T-cell (primary cell): ENCODE measurements at regions of chr1 and their contacts with region 1.

Region 1: DNA sequence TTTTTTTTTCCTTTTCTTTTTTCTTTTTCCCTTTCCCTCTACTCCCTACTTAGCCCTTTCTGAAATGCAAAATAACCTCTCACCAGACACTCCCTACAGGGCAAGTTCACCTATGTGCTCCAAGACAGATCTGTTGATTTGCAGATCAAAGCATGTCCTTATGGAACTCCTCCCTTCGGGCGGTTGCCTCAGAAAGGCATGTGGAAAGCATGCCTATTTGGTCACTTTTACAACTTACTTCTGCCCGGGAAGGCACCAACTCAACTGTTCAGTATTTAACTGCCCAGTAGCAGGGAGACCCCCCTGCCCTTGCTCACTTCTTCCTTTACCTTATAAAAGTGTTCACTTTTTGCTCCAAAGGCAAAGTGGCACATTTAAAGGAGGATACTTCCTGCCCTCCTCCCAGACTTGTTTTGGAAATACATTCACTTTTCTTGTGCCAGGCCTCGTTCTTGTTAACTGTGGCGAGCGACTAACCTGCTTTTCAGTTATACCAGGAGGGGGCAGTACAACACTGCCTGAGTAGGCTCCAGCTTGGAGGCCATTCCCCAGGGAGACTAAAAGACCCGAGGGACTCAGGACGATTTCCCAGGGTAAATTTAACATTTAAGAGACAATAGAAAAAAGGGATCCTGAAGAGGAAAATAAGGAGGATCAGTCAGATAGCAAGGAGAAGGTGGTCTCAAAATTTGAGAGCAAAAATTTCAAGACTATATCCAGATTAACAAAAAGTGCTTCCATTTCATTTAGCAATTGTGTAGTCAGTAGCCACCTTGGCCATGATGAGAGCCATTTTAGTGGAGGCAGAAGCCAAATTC is 12.3 kb upstream of the SLAMF7 start:
- DNase-seq: peak in 34 of 35 experiments; percentile 19 to 89 (median 52)
- ATAC-seq: peak; percentile 74 to 87 (median 77)
- H3K4me3 ChIP-seq: no peak overlapping the region
- H3K4me3 Mint-ChIP-seq: no peak overlapping the region
- H3K27ac ChIP-seq: no peak overlapping the region
- H3K27ac Mint-ChIP-seq: no peak overlapping the region
- H3K4me1 ChIP-seq: peaks cover 6 to 17% of the 10 kb centered on the region in 2 experiments
- H3K4me1 Mint-ChIP-seq: peaks cover 17 to 18% (median 17%) of the 10 kb centered on the region in 3 donors
- H3K27me3 ChIP-seq: no peaks in the 10 kb centered on the region
- H3K27me3 Mint-ChIP-seq: no peaks in the 10 kb centered on the region

Region 2: DNA sequence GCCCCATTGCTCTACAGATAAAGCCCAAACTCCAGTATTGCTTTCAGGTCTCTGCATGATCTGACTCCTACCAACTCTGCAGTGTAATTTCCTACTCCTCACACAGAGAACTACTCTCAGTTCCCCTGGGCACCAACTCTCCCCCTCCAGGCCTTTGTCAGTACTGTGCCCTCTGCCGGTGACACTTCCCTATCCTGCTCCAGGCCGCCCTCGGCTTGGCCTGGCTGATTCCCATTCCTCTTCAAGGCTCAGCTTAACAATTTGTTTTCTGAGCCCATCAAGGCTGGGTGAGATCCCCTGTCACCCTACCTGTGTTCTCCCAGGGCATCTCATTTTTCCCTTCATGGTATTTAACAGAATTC is 897.5 kb before region 1 on chr1:
- CTCF ChIA-PET with region 1: no interaction called
- POLR2A ChIA-PET with region 1: no interaction called
- DNase-seq: peak in 2 of 35 experiments; percentile 7 to 23
- ATAC-seq: no peak
- H3K4me3 ChIP-seq: no peak overlapping the region
- H3K4me3 Mint-ChIP-seq: peak overlapping the region in 1 of 3 donors; percentile 48
- H3K27ac ChIP-seq: no peak overlapping the region
- H3K27ac Mint-ChIP-seq: no peak overlapping the region
- H3K4me1 ChIP-seq: peaks cover 22 to 57% of the 10 kb centered on the region in 2 experiments
- H3K4me1 Mint-ChIP-seq: peaks cover 47 to 51% (median 50%) of the 10 kb centered on the region in 3 donors
- H3K27me3 ChIP-seq: no peaks in the 10 kb centered on the region
- H3K27me3 Mint-ChIP-seq: peaks cover 0 to 2% of the 10 kb centered on the region in 2 donors

Region 3: DNA sequence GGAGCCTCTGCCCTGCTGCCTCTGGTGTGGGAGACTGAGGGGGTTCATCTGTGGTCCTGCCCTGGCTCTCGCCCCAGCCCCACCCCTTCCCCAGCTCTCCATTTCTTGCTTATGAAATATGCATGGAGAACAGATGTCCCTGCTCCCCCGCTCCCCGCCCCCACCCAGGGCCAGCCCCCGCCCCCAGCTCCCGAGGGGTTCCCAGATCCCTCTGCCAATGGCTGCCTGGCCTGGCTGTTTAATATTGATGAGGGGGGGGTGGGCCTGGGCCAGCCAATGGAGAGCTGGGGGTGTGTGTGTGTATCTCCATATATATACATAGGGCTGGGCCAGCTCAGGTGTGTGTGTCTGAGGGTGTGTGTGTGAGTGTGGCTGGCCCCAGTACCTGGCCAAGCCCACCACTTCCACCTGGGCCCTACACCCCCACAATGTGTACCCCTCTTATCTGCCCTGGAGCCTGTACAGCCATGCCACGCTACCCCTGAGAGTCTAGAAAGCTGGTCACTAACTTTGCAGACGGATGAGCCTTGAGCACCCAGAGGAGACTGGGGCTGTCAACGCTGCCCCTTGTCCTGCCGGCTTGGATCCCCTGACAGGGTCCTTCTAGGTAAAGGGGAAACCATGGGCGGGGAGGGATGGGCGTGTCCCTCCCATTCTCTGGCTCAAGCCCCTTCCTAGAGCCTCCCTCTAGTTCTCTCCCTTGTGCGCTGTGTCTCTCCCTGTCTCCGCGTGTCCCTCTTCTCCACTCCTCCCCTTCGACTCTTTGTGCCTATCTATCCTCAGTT is 359.8 kb before region 1 on chr1 and contains the start of gene NHLH1:
- CTCF ChIA-PET with region 1: no interaction called
- POLR2A ChIA-PET with region 1: no interaction called
- DNase-seq: no peak
- ATAC-seq: no peak
- H3K4me3 ChIP-seq: no peak within 1 kb of the TSS
- H3K4me3 Mint-ChIP-seq: no peak within 1 kb of the TSS
- H3K27ac ChIP-seq: no peak within 1 kb of the TSS
- H3K27ac Mint-ChIP-seq: no peak within 1 kb of the TSS
- H3K4me1 ChIP-seq: no peaks in the 10 kb centered on the region
- H3K4me1 Mint-ChIP-seq: peaks cover 0 to 6% (median 3%) of the 10 kb centered on the region in 3 donors
- H3K27me3 ChIP-seq: no peaks in the 10 kb centered on the region
- H3K27me3 Mint-ChIP-seq: no peaks in the 10 kb centered on the region
- total RNA-seq, gene NHLH1: 0.16 to 0.38 (median 0.38) TPM in 3 of 5 donors, not detected in the others

Region 4: DNA sequence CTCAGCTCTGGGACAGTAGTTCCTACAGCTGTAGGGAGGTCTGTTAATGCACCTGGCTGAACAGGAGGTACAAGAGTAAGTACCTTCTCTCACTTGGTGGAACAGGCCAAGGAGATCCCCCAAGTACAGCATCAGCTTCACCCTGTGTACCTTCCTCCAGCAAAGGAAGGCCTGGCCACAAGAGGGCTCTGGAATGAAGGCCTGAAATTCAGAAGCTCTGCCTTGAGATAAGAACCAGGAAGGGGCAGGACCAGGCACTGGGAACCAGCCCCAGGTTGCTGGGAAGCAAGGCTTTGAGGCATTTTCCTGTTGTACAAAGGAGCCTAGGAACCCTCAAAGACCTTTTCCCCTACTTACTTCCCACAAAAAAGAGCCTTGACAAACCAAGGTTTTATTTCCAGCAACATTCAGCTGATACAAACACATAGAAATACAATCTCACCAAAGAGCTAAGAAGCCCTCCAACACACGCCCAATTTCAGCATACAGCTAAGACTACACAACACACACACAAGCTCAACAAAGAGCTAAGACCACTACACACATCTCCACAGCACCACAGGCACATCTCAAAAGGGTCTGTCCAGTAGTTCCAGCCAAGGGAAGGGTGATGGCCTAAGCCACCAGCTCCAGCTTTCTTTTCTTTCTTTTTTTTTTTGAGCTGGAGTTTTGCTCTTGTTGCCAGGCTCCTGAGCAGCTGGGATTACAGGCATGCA is 270.8 kb after region 1 on chr1:
- CTCF ChIA-PET with region 1: no interaction called
- POLR2A ChIA-PET with region 1: interaction called in 1 of 2 experiments, 11 read pairs
- DNase-seq: peak in 29 of 35 experiments; percentile 12 to 66 (median 39)
- ATAC-seq: peak; percentile 76 to 87 (median 80)
- H3K4me3 ChIP-seq: no peak overlapping the region
- H3K4me3 Mint-ChIP-seq: no peak overlapping the region
- H3K27ac ChIP-seq: no peak overlapping the region
- H3K27ac Mint-ChIP-seq: peak overlapping the region; percentile 53 to 69
- H3K4me1 ChIP-seq: peaks cover 0 to 4% of the 10 kb centered on the region in 2 experiments
- H3K4me1 Mint-ChIP-seq: peaks cover 5 to 8% (median 5%) of the 10 kb centered on the region in 3 donors
- H3K27me3 ChIP-seq: no peaks in the 10 kb centered on the region
- H3K27me3 Mint-ChIP-seq: no peaks in the 10 kb centered on the region